Posterior cingulate gyrus (tissue), 11 donors: ENCODE measurements at regions of chrX and their contacts with region 1.

Region 1: GRCh38 chrX:123236859-123237258 is 52.8 kb downstream of the GRIA3 start:
- DNase-seq: no peak

Region 2: GRCh38 chrX:121831601-121832000 is 1405.3 kb before region 1 on chrX:
- intact Hi-C with region 1: loop called (anchors 10 kb)
- DNase-seq: no peak